ENCODE measurements at regions of chr13 and their contacts with region 1.

Region 1: GRCh38 chr13:19863323-19864023 is at the start of gene ZMYM5:
- DNase-seq: peak; percentile 99
- H3K4me3 Mint-ChIP-seq: peak within 1 kb of the TSS; percentile 92
- H3K27ac Mint-ChIP-seq: peak within 1 kb of the TSS; percentile 88
- H3K4me1 Mint-ChIP-seq: peaks cover 13% of the 10 kb centered on the region
- H3K27me3 Mint-ChIP-seq: no peaks in the 10 kb centered on the region
- CTCF ChIP-seq: no peak
- total RNA-seq, gene ZMYM5: 12.1 and 14.4 TPM in 2 replicates

Region 2: DNA sequence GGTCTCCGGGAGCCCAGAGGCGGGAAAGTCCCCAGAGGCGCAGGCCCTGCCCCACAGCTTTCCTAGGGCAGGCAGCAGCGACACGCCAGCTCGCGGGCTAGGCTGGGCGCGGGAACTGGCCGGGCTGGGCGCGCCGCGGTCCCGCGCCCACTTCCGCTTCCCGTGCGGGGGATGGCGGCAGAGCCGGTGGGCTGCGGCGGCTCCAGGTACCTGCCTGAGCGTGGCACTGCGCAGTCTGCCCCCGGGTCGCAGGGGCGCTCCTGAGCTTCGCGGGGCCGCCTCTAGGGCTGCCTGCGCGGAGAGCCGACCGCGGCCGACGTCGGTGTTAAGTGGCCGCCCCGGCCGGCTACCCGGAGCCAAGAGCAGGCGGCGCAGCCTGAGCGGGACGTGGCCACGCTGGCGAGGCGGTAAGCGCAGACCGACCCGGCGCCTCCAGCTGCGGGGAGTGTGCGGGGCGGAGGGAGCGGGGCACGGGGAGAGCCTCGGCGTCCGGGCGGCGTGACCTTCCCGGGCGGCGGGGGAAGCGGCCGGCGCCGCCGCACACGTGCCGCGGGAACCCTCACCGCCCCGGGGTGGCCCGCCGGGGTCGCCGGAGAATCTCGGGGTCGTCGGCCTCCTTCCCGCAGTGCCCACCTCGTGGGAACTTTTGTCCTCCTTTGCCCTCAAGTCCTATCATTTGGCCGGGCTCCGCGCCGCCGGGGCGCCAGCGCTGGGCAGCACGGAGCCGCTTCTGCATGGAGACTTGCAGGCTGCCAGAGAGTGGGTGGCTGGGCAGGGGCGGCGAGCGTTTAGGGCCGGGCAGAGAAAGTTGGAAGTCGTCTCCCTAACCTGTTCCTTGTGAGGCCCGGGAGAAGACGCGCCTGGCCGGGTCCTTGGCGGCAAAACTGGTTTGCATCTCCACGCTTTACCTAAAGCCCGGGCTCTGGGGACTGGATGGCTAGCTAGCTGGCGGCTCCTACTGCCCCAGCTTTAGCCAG is 261.4 kb before region 1 on chr13:
- CTCF ChIA-PET with region 1: no interaction called
- POLR2A ChIA-PET with region 1: interaction called, 3 read pairs
- intact Hi-C with region 1: loop called (anchors 10 kb)
- DNase-seq: peak; percentile 46
- H3K4me3 Mint-ChIP-seq: peak overlapping the region; percentile 69
- H3K27ac Mint-ChIP-seq: no peak overlapping the region
- H3K4me1 Mint-ChIP-seq: peaks cover 12% of the 10 kb centered on the region
- H3K27me3 Mint-ChIP-seq: no peaks in the 10 kb centered on the region
- CTCF ChIP-seq: no peak

Region 3: DNA sequence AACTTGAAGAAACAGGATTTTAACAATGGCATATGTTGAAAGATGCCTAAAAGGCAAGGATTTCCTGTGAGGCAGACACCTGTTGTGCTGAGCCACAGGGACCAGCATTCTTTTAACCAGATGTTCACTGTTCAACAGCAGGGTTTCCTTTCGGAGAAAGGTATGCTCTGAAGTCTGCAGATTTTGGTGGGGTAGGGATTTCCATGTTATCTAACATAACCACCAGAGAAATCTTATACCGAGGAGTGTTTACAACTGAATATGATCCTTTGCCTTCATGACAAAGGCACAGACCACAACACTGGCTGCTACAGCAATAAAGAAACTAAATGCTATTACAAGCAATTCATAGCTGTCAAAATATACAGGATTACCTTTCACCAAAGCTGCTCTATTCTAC is 182.0 kb before region 1 on chr13:
- CTCF ChIA-PET with region 1: no interaction called
- POLR2A ChIA-PET with region 1: interaction called, 3 read pairs
- intact Hi-C with region 1: loop called (anchors 5 kb)
- DNase-seq: no peak
- H3K4me3 Mint-ChIP-seq: no peak overlapping the region
- H3K27ac Mint-ChIP-seq: no peak overlapping the region
- H3K4me1 Mint-ChIP-seq: no peaks in the 10 kb centered on the region
- H3K27me3 Mint-ChIP-seq: no peaks in the 10 kb centered on the region
- CTCF ChIP-seq: no peak

Region 4: GRCh38 chr13:19695829-19696228 is 167.6 kb before region 1 on chr13:
- CTCF ChIA-PET with region 1: no interaction called
- POLR2A ChIA-PET with region 1: no interaction called
- intact Hi-C with region 1: no loop called
- DNase-seq: no peak
- H3K4me3 Mint-ChIP-seq: no peak overlapping the region
- H3K27ac Mint-ChIP-seq: no peak overlapping the region
- H3K4me1 Mint-ChIP-seq: peaks cover 11% of the 10 kb centered on the region
- H3K27me3 Mint-ChIP-seq: no peaks in the 10 kb centered on the region
- CTCF ChIP-seq: no peak

Region 5: DNA sequence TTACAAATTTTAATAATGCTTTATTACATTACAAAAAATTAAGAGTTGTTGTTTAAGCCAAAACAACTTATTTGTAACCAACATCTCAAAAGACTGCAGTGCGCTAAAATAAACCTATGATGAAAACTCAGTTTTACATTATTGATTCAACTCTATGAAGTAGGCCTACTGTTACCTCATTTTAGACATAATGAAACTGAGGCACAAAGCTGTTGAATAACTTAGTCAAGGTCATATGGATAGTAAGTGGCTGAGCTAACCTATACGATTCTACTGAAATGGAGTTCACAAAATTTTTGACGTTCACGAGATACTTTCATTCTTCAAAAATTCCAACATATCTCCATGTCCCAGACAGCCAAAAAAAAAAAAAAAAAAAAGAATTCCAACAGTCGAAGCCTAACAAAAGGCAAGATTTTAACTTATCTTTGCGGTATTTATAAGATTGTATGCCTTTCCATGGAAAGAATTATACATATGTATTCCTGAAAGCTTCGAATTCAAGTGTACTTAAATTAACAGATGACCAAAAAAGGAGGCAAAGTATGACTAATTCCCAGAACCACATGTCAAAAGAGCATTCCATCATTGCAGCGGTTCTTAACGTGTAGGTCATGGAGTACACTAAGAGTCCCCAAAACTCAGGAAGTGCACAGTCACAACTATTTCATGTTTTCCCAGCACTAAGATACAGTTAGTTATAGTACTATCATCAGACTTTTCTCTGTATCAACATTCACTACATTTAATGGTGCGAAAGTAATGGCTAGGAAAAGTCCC is 150.1 kb before region 1 on chr13:
- CTCF ChIA-PET with region 1: no interaction called
- POLR2A ChIA-PET with region 1: no interaction called
- intact Hi-C with region 1: no loop called
- DNase-seq: peak; percentile 64
- H3K4me3 Mint-ChIP-seq: no peak overlapping the region
- H3K27ac Mint-ChIP-seq: no peak overlapping the region
- H3K4me1 Mint-ChIP-seq: no peaks in the 10 kb centered on the region
- H3K27me3 Mint-ChIP-seq: no peaks in the 10 kb centered on the region
- CTCF ChIP-seq: no peak

Region 6: DNA sequence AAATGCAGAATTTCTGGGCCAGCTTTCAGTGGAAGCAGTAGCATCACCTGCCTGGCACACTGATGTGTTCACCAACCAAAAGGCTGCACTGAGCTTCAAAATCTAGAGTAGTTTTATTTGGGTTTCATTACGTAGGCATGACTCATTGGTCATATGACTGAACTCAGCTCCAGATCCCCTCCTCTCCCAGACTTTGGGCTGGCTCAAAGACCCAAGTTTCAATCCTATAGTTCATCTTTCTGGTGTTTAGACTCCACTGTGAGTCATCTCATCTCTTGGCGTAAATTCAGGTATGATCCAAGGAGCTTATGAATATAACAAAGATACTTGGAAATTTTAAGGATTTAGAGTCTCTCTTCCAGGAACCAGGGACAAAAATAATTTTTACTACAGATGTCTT is 17.7 kb before region 1 on chr13:
- CTCF ChIA-PET with region 1: interaction called, 4 read pairs
- POLR2A ChIA-PET with region 1: interaction called, 33 read pairs
- intact Hi-C with region 1: no loop called
- DNase-seq: peak; percentile 97
- H3K4me3 Mint-ChIP-seq: no peak overlapping the region
- H3K27ac Mint-ChIP-seq: no peak overlapping the region
- H3K4me1 Mint-ChIP-seq: peaks cover 6% of the 10 kb centered on the region
- H3K27me3 Mint-ChIP-seq: no peaks in the 10 kb centered on the region
- CTCF ChIP-seq: no peak

Region 7: GRCh38 chr13:19910336-19911072 is 47.0 kb after region 1 on chr13:
- CTCF ChIA-PET with region 1: no interaction called
- POLR2A ChIA-PET with region 1: interaction called, 10 read pairs
- intact Hi-C with region 1: no loop called
- DNase-seq: peak; percentile 69
- H3K4me3 Mint-ChIP-seq: peak overlapping the region; percentile 48
- H3K27ac Mint-ChIP-seq: peak overlapping the region; percentile 92
- H3K4me1 Mint-ChIP-seq: peaks cover 12% of the 10 kb centered on the region
- H3K27me3 Mint-ChIP-seq: no peaks in the 10 kb centered on the region
- CTCF ChIP-seq: no peak

Region 8: GRCh38 chr13:20057963-20058362 is 194.5 kb after region 1 on chr13:
- CTCF ChIA-PET with region 1: no interaction called
- POLR2A ChIA-PET with region 1: no interaction called
- intact Hi-C with region 1: no loop called
- DNase-seq: no peak
- H3K4me3 Mint-ChIP-seq: no peak overlapping the region
- H3K27ac Mint-ChIP-seq: no peak overlapping the region
- H3K4me1 Mint-ChIP-seq: no peaks in the 10 kb centered on the region
- H3K27me3 Mint-ChIP-seq: no peaks in the 10 kb centered on the region
- CTCF ChIP-seq: peak; percentile 11

Measured in MCF 10A (cell line).